ENCODE measurements at regions of chr18 and their contacts with region 1.

Region 1: DNA sequence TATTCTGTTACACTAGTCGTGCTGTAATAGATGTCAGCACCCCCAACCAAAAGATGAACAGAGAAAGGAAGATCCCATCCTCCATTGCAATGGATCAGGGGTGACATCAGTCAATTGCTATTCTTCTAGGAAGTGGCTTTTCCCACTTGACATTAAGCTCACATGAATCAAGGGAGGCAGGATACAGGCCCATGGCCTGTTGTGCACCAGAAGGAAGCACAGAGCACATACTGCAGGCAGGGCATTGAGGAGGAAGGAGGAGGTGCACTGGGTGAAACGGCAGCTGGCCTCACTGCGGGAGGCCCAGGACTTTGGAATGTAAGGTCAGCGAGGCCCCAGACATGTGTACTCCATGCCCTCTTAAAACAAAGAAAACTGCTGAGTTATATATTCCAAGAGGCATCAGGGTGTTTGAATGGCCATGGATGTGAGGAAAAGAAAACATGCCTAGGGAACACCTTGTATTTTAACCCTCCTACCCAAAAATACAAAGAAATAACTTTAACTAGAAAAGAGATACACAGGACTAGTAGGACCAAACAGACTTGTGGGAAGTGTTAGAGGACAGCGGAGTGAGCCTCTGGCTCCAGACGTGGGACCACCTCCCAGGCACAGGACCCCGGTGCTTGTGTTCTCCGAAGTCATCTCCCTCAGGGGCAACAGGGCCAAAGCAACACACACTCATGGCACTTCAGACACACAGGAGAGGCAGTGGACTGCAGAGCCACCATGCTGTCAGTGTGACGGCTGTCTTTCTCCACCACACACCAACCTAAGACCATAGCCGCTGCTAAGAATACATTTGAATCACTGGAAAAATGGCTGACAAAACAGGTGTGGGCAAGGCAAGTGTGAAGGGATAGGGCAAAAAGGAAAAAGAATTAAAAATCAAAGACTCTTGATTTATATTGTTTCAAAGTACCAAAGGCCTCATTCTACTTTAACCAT is 51.4 kb upstream of the RIOK3 start:
- DNase-seq: no peak
- H3K4me3 ChIP-seq: no peak overlapping the region
- H3K27ac ChIP-seq: no peak overlapping the region
- H3K4me1 ChIP-seq: no peaks in the 10 kb centered on the region
- H3K27me3 ChIP-seq: no peaks in the 10 kb centered on the region
- CTCF ChIP-seq: no peak
- POLR2A ChIP-seq: no peak

Region 2: DNA sequence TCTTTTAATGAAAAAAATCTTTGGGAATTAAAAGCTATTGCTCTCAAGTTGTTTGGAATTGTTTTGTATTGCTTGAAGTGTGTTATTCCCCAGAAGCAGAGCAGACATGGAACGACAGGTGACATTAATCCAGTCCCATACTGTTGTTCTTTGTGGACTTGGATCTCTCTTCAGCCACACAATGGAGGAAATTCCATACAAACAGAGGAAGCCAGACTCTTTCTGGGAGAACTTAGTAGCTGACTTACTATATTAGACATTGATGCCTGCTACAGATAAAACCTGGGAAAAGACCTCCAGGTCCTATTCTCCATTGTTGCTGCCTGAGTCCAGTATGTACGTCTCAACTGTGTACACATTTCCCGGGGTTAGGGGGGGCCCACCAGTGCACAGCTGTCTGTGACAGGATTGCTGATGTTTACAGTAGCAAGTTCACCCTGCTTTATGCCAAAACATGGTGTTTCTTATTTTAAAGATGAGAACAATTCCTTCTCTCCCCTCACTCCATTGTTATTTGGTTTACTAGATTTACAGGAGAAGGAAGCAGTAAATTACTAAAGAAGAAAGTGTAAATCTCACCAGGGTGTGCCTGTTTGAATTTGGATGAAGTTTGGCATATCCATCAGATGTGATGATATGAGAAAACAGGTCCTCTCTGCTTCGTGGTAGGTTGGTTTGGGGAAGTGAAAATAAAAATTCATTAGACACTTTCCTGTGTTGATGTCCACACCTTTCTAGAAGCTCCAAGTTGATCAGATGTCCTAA is 610.9 kb before region 1 on chr18:
- intact Hi-C with region 1: loop called (anchors 10 kb)
- DNase-seq: no peak
- H3K4me3 ChIP-seq: no peak overlapping the region
- H3K27ac ChIP-seq: no peak overlapping the region
- H3K4me1 ChIP-seq: no peaks in the 10 kb centered on the region
- H3K27me3 ChIP-seq: no peaks in the 10 kb centered on the region
- CTCF ChIP-seq: no peak
- POLR2A ChIP-seq: no peak

Measured in breast epithelium (tissue), 4 donors.